ENCODE measurements at regions of chr15 and their contacts with region 1.

Region 1: GRCh38 chr15:63093486-63094205 is 28.0 kb upstream of the LACTB start:
- DNase-seq: peak; percentile 73
- H3K4me3 ChIP-seq: no peak overlapping the region
- H3K27ac ChIP-seq: no peak overlapping the region
- H3K4me1 ChIP-seq: peaks cover 22% of the 10 kb centered on the region
- H3K27me3 ChIP-seq: no peaks in the 10 kb centered on the region
- CTCF ChIP-seq: peak; percentile 83 to 84
- POLR2A ChIP-seq: no peak

Region 2: GRCh38 chr15:61768091-61768490 is 1325.6 kb before region 1 on chr15:
- CTCF ChIA-PET with region 1: no interaction called
- POLR2A ChIA-PET with region 1: no interaction called
- dilution Hi-C with region 1: no loop called
- intact Hi-C with region 1: no loop called
- DNase-seq: no peak
- H3K4me3 ChIP-seq: no peak overlapping the region
- H3K27ac ChIP-seq: no peak overlapping the region
- H3K4me1 ChIP-seq: no peaks in the 10 kb centered on the region
- H3K27me3 ChIP-seq: no peaks in the 10 kb centered on the region
- CTCF ChIP-seq: no peak
- POLR2A ChIP-seq: no peak

Region 3: DNA sequence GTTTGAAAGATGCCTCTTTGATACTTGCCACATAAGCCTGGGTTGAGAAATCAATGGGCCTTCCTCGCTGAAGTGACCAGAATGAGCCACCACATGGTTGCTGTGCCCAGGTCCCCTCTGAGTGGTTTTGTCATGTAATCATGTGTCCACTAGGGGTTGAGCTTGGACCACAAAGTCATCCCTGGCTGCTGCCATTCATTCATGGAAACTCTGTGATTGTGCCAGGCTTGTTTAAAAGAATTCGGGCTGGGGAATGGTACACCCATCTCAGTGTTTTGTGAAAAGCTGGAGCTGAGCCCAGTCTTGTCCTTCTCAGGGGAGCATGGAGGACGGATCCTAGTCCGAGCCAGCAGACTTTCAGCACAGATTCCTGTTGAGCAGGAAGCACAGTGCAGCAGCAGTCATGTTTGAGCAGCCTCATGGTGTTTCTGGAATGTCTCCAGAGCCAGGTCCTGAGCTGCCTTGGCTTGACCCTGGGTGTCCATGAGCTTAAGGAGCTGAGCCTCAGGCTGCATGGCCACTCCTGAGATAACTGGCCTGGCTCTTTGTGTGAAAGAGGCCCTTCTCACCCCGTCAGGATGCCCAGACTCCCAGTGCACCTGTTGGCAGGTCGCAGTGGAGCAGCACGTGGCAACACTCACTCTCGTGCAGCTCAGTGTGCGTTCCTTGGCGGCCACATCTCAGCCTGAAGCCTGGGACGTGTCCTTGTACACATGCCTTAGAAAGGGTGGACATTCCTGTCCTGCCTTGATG is 311.4 kb before region 1 on chr15:
- CTCF ChIA-PET with region 1: interaction called, 8 read pairs
- POLR2A ChIA-PET with region 1: no interaction called
- dilution Hi-C with region 1: no loop called
- intact Hi-C with region 1: loop called (anchors 1 kb)
- DNase-seq: peak; percentile 90
- H3K4me3 ChIP-seq: no peak overlapping the region
- H3K27ac ChIP-seq: no peak overlapping the region
- H3K4me1 ChIP-seq: peaks cover 8% of the 10 kb centered on the region
- H3K27me3 ChIP-seq: no peaks in the 10 kb centered on the region
- CTCF ChIP-seq: peak; percentile 73 to 77
- POLR2A ChIP-seq: no peak

Region 4: GRCh38 chr15:63048115-63048775 is 45.4 kb before region 1 on chr15:
- CTCF ChIA-PET with region 1: interaction called, 36 read pairs
- POLR2A ChIA-PET with region 1: no interaction called
- dilution Hi-C with region 1: no loop called
- intact Hi-C with region 1: loop called (anchors 1 kb)
- DNase-seq: peak; percentile 94
- H3K4me3 ChIP-seq: peak overlapping the region; percentile 72 to 87 (median 78)
- H3K27ac ChIP-seq: peak overlapping the region; percentile 68
- H3K4me1 ChIP-seq: peaks cover 81% of the 10 kb centered on the region
- H3K27me3 ChIP-seq: no peaks in the 10 kb centered on the region
- CTCF ChIP-seq: peak; percentile 92 to 95
- POLR2A ChIP-seq: peak; percentile 66

Region 5: GRCh38 chr15:63067306-63067705 is 26.3 kb before region 1 on chr15:
- CTCF ChIA-PET with region 1: no interaction called
- POLR2A ChIA-PET with region 1: no interaction called
- dilution Hi-C with region 1: no loop called
- intact Hi-C with region 1: no loop called
- DNase-seq: no peak
- H3K4me3 ChIP-seq: no peak overlapping the region
- H3K27ac ChIP-seq: no peak overlapping the region
- H3K4me1 ChIP-seq: peaks cover 3% of the 10 kb centered on the region
- H3K27me3 ChIP-seq: no peaks in the 10 kb centered on the region
- CTCF ChIP-seq: no peak
- POLR2A ChIP-seq: no peak

Region 6: GRCh38 chr15:63135804-63136203 is 42.2 kb after region 1 on chr15:
- CTCF ChIA-PET with region 1: no interaction called
- POLR2A ChIA-PET with region 1: no interaction called
- dilution Hi-C with region 1: no loop called
- intact Hi-C with region 1: loop called (anchors 1 kb)
- DNase-seq: peak; percentile 94
- H3K4me3 ChIP-seq: no peak overlapping the region
- H3K27ac ChIP-seq: peak overlapping the region; percentile 96
- H3K4me1 ChIP-seq: peaks cover 36% of the 10 kb centered on the region
- H3K27me3 ChIP-seq: no peaks in the 10 kb centered on the region
- CTCF ChIP-seq: no peak
- POLR2A ChIP-seq: peak; percentile 78

Region 7: DNA sequence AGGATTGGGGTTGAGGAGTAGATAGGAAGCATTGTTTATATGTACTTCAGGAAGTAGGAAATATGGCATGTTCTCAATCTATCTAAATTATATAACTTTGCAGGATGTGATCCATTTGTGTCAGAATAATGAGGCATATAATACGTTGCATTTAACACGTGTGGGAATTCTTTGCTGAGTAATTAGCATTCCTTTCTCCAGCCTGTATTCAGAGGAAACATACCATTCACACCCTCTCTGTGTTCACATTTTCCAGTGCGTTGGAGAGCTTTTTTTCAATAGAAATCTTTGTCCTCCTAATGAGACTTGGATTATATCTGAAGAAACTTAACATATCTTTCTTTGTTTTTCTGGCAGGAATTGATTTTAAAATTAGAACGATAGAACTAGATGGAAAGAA is 150.8 kb after region 1 on chr15:
- CTCF ChIA-PET with region 1: no interaction called
- POLR2A ChIA-PET with region 1: no interaction called
- dilution Hi-C with region 1: no loop called
- intact Hi-C with region 1: loop called (anchors 5 kb)
- DNase-seq: peak; percentile 92
- H3K4me3 ChIP-seq: peak overlapping the region in 1 of 3 experiments; percentile 33
- H3K27ac ChIP-seq: peak overlapping the region; percentile 90
- H3K4me1 ChIP-seq: peaks cover 21% of the 10 kb centered on the region
- H3K27me3 ChIP-seq: no peaks in the 10 kb centered on the region
- CTCF ChIP-seq: no peak
- POLR2A ChIP-seq: no peak

Measured in endothelial cell of umbilical vein (primary cell).